ENCODE measurements at regions of chr1 and their contacts with region 1.

Region 1: DNA sequence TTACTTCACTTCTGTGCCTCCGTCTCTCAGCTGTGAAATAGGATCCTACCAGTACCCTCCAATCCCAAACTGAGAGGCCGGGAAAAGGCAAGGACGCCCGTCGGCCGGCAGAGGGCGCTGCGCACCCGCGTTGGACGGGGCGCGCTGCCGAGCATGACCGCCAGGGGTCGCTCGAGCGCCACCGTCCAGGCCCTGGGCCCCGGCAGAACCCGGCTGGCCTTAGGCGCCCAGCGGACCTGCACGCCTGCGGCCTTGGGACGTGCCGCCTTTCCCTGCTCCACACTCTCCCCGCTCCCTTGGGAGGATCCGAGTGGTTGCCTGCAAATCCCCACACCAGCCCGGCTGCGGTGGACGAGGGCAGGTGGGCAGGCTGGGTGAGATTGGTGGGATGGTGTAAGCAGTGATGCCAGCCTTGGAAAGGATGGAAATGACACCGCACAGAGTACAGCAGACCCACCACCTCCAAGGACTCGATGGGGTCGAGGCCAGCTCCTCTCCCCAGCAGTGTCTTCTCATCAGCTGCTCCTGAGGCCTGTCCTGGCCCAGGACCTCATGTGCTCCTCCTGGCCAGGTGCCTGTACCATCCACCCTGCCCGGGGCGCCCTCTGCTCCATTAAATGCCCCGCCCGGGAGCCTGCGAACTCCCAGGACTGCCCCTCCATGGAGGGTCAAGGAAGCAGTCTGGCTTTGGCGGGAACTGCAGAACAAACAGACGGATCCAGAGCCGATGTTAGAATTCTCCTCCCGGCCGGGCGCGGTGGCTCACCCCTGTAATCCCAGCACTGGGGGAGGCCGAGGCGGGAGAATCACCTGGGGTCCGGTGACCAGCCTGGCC is 47.4 kb upstream of the LBR start:
- DNase-seq: peak; percentile 90

Region 2: GRCh38 chr1:225766967-225767633 is 291.9 kb after region 1 on chr1:
- intact Hi-C with region 1: loop called (anchors 2 to 5 kb)
- DNase-seq: no peak

Region 3: GRCh38 chr1:225845571-225846259 is 370.5 kb after region 1 on chr1:
- intact Hi-C with region 1: loop called (anchors 2 to 5 kb)
- DNase-seq: peak; percentile 94

Region 4: DNA sequence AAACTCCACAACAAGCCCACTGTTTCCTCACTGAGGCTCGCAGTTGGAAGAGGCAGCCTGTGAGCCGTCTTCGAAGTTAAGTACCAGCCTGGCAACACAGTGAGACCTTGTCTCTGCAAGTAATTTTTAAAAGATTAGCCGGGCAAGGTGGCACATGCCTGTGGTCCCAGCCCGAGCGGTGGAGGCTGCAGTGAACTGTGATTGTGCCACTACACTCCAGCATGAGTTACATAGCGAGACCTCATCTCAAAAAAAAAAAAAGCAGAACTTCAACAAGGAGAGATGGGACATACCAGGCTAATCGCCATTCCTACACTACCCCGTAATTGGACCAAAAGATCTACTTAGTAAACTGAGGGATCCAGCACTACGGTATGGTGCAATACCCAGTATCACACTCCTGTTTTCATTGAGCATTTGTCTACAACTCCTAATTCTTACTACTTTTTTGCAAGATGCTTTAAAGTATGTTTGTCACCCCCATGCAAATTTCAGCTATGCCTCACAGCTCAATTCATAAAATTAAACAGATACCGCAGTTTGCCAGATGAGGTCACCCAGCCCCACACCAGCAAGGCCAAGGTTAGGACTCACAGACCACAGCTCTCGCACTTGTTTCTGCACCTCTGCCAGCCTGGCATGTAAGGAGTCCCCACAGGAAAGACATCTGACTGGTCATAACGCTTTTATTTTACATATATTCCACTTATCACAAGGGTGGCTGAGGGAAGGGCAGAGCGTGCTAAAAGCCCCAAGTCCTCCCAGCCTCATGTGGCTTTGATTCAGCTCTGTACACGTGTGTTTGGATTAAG is 502.9 kb after region 1 on chr1:
- intact Hi-C with region 1: loop called (anchors 5 to 10 kb)
- DNase-seq: no peak

Region 5: GRCh38 chr1:227111782-227112181 is 1636.6 kb after region 1 on chr1:
- intact Hi-C with region 1: no loop called
- DNase-seq: no peak